ENCODE measurements at regions of chr18 and their contacts with region 1.

Region 1: DNA sequence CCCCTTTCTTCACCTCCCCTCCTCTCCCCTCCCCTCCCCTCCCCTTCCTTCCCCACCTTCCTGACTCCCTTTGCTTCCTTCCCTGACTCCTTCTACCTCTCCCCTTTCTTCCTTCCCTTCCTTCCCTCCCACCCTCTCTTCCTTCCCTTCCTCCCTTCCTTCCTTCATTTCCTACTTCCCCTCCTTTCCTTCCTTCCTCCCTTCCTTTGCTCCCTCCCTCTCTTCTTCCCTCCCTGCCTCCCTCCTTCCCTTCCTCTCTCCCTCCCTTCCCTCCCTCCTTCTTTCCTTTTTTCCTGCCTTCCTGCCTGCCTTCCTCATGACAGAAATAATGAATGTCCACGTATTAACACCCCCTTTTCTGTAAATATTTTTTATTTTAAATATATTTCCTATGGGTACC is 260.2 kb downstream of the ZNF407 start:
- DNase-seq: no peak
- H3K4me3 Mint-ChIP-seq: no peak overlapping the region
- H3K27ac Mint-ChIP-seq: no peak overlapping the region
- H3K4me1 Mint-ChIP-seq: no peaks in the 10 kb centered on the region
- H3K27me3 Mint-ChIP-seq: no peaks in the 10 kb centered on the region
- CTCF ChIP-seq: no peak

Region 2: GRCh38 chr18:75521812-75522211 is 663.9 kb after region 1 on chr18:
- CTCF ChIA-PET with region 1: interaction called, 10 read pairs
- intact Hi-C with region 1: no loop called
- DNase-seq: no peak
- H3K4me3 Mint-ChIP-seq: no peak overlapping the region
- H3K27ac Mint-ChIP-seq: no peak overlapping the region
- H3K4me1 Mint-ChIP-seq: no peaks in the 10 kb centered on the region
- H3K27me3 Mint-ChIP-seq: peaks cover 13% of the 10 kb centered on the region
- CTCF ChIP-seq: no peak